ENCODE measurements at regions of chr21 and their contacts with region 1.

Region 1: GRCh38 chr21:41933313-41934086 is 20.3 kb downstream of the C2CD2 start:
- DNase-seq: no peak
- ATAC-seq: peak; percentile 17
- H3K4me3 ChIP-seq: no peak overlapping the region
- H3K4me3 Mint-ChIP-seq: no peak overlapping the region
- H3K27ac ChIP-seq: no peak overlapping the region
- H3K27ac Mint-ChIP-seq: no peak overlapping the region
- H3K4me1 ChIP-seq: peaks cover 8% of the 10 kb centered on the region
- H3K4me1 Mint-ChIP-seq: peaks cover 15% of the 10 kb centered on the region
- H3K27me3 ChIP-seq: peaks cover 0 to 2% of the 10 kb centered on the region in 2 experiments
- H3K27me3 Mint-ChIP-seq: peaks cover 7% of the 10 kb centered on the region
- CTCF ChIP-seq: no peak

Region 2: DNA sequence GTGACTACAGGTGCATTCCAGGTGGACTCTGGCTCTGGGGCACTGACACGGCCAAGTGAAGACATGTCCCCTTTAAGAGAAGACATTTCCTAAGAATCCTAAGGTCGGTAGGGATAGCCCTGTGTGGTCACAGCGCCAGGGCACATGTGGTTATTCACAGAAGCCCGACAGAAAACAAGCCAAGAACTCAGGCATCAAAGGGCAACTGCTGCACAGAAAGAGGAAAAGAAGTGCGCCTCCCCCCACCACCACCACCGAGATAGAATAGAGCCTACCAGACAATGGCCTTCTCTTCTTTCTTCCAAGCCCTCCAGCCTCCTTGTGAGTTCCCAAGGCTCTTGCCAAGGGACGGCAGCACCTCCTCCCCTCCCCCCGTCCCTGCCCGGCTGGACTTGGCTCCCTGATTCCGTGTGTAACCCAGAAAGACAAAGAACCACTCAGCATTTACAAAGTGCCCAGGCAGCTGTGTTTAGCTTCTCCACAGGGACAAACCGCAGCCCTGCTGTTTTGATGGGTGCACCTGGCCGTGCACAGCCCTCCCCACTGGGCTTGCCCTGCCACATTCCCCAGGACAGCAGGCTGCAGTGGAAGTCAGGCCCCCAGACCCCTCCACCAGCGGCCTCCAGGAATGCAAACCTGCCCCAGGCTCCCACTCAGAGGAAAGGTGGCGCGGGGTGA is 455.7 kb before region 1 on chr21:
- CTCF ChIA-PET with region 1: no interaction called
- POLR2A ChIA-PET with region 1: no interaction called
- intact Hi-C with region 1: no loop called
- DNase-seq: no peak
- ATAC-seq: no peak
- H3K4me3 ChIP-seq: no peak overlapping the region
- H3K4me3 Mint-ChIP-seq: no peak overlapping the region
- H3K27ac ChIP-seq: no peak overlapping the region
- H3K27ac Mint-ChIP-seq: no peak overlapping the region
- H3K4me1 ChIP-seq: no peaks in the 10 kb centered on the region
- H3K4me1 Mint-ChIP-seq: peaks cover 7% of the 10 kb centered on the region
- H3K27me3 ChIP-seq: no peaks in the 10 kb centered on the region
- H3K27me3 Mint-ChIP-seq: peaks cover 8% of the 10 kb centered on the region
- CTCF ChIP-seq: no peak

Region 3: GRCh38 chr21:41816220-41817165 is 117.0 kb before region 1 on chr21:
- CTCF ChIA-PET with region 1: no interaction called
- POLR2A ChIA-PET with region 1: no interaction called
- intact Hi-C with region 1: loop called in 1 of 2 experiments (anchors 5 kb)
- DNase-seq: peak; percentile 44 to 77 (median 53)
- ATAC-seq: peak; percentile 80
- H3K4me3 ChIP-seq: no peak overlapping the region
- H3K4me3 Mint-ChIP-seq: no peak overlapping the region
- H3K27ac ChIP-seq: no peak overlapping the region
- H3K27ac Mint-ChIP-seq: no peak overlapping the region
- H3K4me1 ChIP-seq: peaks cover 4% of the 10 kb centered on the region
- H3K4me1 Mint-ChIP-seq: no peaks in the 10 kb centered on the region
- H3K27me3 ChIP-seq: no peaks in the 10 kb centered on the region
- H3K27me3 Mint-ChIP-seq: no peaks in the 10 kb centered on the region
- CTCF ChIP-seq: peak; percentile 71